ENCODE measurements at regions of chr1 and their contacts with region 1.

Region 1: GRCh38 chr1:85307987-85308832 is 31.8 kb upstream of the BCL10 start:
- DNase-seq: peak; percentile 94
- H3K4me3 ChIP-seq: no peak overlapping the region
- H3K27ac ChIP-seq: no peak overlapping the region
- H3K4me1 ChIP-seq: peaks cover 18% of the 10 kb centered on the region
- H3K27me3 ChIP-seq: no peaks in the 10 kb centered on the region
- CTCF ChIP-seq: peak; percentile 100

Region 2: DNA sequence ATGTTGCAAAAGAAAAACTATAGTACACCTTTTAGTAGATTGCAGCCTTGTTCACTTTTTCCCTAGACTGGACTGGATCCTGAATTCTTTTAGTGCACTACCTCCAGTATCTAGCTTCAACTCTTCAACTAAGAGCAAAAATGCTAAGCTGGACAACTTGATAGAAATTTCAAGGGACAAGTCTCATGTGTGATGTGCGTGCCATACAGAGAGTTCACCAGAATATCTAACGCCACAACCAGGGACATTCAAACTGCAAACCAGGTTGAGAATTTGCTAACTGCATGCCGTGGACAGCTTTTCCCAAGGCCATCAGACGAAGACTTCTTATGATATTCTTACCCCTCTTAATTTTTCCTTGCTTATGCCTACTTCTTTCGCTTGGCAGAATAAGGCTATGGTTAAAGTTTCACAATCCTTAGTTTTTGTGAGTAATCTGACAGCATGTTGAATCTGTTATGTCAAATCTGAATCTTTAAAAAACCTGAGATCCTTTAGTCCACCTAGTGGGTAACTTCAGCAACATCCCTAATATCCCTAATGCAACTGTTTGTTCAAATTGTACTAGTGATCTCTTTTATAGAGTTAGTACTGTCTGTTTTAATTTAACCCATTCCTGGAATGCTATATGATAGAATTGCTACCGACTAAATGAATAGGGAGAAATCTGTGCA is 90.3 kb after region 1 on chr1:
- CTCF ChIA-PET with region 1: interaction called, 5 read pairs
- POLR2A ChIA-PET with region 1: no interaction called
- intact Hi-C with region 1: loop called (anchors 1 kb)
- DNase-seq: peak; percentile 72
- H3K4me3 ChIP-seq: no peak overlapping the region
- H3K27ac ChIP-seq: peak overlapping the region; percentile 48
- H3K4me1 ChIP-seq: peaks cover 31% of the 10 kb centered on the region
- H3K27me3 ChIP-seq: no peaks in the 10 kb centered on the region
- CTCF ChIP-seq: peak; percentile 65

Region 3: GRCh38 chr1:85502625-85503083 is 194.4 kb after region 1 on chr1:
- CTCF ChIA-PET with region 1: interaction called, 10 read pairs
- POLR2A ChIA-PET with region 1: no interaction called
- intact Hi-C with region 1: loop called (anchors 1 kb)
- DNase-seq: peak; percentile 86
- H3K4me3 ChIP-seq: no peak overlapping the region
- H3K27ac ChIP-seq: no peak overlapping the region
- H3K4me1 ChIP-seq: no peaks in the 10 kb centered on the region
- H3K27me3 ChIP-seq: no peaks in the 10 kb centered on the region
- CTCF ChIP-seq: peak; percentile 78

Region 4: GRCh38 chr1:85580872-85581801 is 272.9 kb after region 1 on chr1:
- CTCF ChIA-PET with region 1: no interaction called
- POLR2A ChIA-PET with region 1: no interaction called
- intact Hi-C with region 1: loop called (anchors 1 kb)
- DNase-seq: peak; percentile 91
- H3K4me3 ChIP-seq: peak overlapping the region; percentile 83
- H3K27ac ChIP-seq: peak overlapping the region; percentile 98
- H3K4me1 ChIP-seq: peaks cover 46% of the 10 kb centered on the region
- H3K27me3 ChIP-seq: no peaks in the 10 kb centered on the region
- CTCF ChIP-seq: peak; percentile 86

Region 5: DNA sequence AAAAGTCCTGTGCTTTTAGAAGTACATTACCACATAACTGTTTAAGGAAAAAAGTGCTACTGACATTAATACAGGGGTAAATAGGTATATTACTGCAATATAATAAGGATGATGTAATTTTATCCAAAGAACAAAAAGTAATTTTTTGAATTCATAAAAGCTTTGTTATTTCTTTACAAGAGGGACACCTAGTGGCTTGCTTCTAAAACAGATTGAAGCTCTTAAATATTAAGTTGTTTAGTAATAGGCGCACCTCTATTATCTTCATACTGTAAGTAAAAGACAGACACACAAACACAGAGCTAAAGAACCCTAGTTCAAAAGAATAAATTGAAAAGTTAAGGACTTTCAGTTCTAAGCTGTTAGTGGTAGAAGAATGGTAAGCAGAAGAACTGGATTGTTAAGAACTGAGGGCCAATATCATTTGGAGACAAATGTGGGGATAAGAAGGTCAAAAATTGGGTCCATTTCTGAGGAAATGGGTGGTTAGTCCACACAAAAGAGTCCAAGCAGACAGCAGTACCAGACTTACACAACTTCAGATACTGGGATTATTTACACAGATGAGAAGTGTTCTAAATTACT is 384.6 kb after region 1 on chr1:
- CTCF ChIA-PET with region 1: interaction called, 17 read pairs
- POLR2A ChIA-PET with region 1: no interaction called
- intact Hi-C with region 1: loop called (anchors 1 kb)
- DNase-seq: peak; percentile 47
- H3K4me3 ChIP-seq: no peak overlapping the region
- H3K27ac ChIP-seq: no peak overlapping the region
- H3K4me1 ChIP-seq: peaks cover 4% of the 10 kb centered on the region
- H3K27me3 ChIP-seq: no peaks in the 10 kb centered on the region
- CTCF ChIP-seq: peak; percentile 68

Region 6: GRCh38 chr1:85884372-85885035 is 576.3 kb after region 1 on chr1:
- CTCF ChIA-PET with region 1: no interaction called
- POLR2A ChIA-PET with region 1: no interaction called
- intact Hi-C with region 1: loop called (anchors 2 kb)
- DNase-seq: peak; percentile 40
- H3K4me3 ChIP-seq: no peak overlapping the region
- H3K27ac ChIP-seq: no peak overlapping the region
- H3K4me1 ChIP-seq: no peaks in the 10 kb centered on the region
- H3K27me3 ChIP-seq: no peaks in the 10 kb centered on the region
- CTCF ChIP-seq: peak; percentile 60

Region 7: DNA sequence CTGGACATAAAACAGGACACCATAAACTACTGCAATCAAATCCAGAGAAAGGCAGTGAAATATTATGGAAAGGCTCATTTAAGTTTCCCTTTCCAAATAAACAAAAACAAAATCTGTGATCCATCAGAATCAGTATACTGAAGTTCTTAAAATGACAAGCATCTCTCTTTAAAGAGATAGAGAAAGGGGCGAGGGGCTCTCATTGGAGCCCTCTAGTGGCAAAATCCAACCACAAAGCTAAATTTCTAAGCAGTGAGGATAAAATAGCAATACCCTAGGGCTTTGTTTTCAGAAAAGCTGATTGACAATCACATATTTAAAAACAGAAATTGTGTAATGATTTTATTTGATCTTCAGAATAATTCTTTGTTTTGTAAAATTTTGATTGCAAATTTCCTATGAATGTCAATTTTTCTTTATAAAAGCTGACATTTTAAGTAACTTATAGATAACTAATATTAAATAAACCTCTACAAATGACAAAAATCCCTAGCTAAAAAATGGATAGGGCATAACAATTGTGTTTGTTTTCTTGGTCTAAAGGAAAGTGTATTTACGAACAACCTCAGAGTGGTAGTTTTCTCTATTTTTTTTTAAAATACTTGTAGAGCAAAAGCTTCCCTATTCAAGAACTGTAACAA is 710.2 kb after region 1 on chr1:
- CTCF ChIA-PET with region 1: no interaction called
- POLR2A ChIA-PET with region 1: no interaction called
- intact Hi-C with region 1: loop called (anchors 2 kb)
- DNase-seq: peak; percentile 56
- H3K4me3 ChIP-seq: no peak overlapping the region
- H3K27ac ChIP-seq: no peak overlapping the region
- H3K4me1 ChIP-seq: no peaks in the 10 kb centered on the region
- H3K27me3 ChIP-seq: no peaks in the 10 kb centered on the region
- CTCF ChIP-seq: peak; percentile 87

Measured in A673 (cell line).